ENCODE measurements at regions of chr19 and their contacts with region 1.

Region 1: DNA sequence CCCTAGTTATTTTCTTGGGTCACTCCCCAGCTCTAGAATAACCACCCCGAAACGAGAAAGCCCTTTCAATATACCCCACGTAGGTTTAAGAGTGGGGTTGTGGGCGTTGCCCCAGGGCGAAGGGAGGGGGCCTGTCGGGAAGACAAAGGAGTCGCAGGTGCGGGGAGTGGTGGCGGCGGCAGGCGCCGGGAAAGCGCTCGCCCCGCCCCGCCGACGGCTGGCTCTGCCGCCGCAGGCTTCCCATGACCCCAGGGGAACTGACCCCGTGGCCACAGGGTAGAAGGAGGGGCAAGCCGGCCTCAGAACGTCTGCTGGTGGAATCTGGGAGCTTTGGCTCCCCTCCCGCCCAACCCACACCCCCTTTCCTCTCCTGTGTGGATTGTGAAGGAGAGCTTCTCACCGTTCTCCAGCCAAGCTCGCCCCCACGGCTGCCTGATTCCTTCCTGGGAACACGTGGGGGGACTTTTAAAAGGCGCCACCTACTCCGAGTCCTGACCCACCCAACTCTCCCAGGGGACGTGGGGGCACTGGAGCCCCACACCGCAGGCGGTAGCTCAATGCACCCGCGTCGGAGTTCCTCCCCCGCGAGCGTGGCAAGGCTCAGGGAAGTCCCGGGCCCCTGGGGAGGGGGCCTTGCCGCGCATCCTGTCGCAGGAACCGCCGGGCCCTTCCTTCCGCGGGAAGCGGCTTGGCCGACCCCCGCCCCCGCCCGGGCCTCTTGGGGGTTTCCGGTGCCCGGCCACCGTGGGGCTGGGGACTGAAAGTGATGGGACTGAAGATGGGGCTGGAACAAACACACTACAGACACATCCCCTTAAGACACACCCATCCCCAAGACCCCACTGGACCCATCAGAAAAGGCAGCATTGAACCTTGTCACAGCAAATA is 5.5 kb downstream of the IER2 start:
- DNase-seq: peak; percentile 81
- ATAC-seq: peak; percentile 14
- H3K4me3 ChIP-seq: peak overlapping the region; percentile 93
- H3K27ac ChIP-seq: peak overlapping the region; percentile 91
- H3K4me1 ChIP-seq: peaks cover 22% of the 10 kb centered on the region
- H3K27me3 ChIP-seq: no peaks in the 10 kb centered on the region
- CTCF ChIP-seq: no peak

Region 2: DNA sequence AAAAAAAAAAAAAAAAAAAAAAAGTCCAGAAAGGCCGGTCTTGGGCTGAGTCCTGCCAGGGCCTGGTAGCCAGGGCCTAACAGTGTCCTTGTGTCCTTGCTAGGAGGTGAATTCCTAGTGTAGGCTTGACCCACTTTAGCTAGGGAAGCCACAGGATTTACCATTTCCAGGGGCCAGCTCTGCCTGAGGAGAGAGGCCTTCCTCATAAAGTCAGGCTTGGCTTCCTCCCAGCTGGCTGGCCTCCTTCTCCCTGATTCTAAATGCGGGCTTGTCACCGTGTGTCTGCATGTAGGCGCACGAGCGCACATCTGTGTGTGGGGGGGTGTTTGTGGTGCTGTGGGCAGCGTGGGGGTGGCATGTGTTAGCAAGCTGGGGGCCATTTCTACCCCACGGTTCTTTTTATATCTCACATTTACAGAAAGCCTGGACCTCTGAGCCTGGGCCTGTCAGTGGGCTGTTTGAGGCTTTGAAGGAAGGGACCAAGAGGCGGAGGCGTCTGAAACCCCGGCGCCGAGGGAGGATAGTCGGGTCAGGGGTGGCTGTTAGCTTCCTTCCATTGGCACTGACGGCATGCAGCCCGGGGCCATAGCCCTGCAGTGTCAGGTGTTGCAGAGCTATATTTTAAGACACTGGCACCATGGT is 26.2 kb after region 1 on chr19:
- CTCF ChIA-PET with region 1: no interaction called
- POLR2A ChIA-PET with region 1: interaction called, 16 read pairs
- intact Hi-C with region 1: no loop called
- DNase-seq: peak; percentile 66
- ATAC-seq: peak; percentile 85
- H3K4me3 ChIP-seq: no peak overlapping the region
- H3K27ac ChIP-seq: peak overlapping the region; percentile 16; the same call in 1 of the 2 replicates
- H3K4me1 ChIP-seq: peaks cover 8% of the 10 kb centered on the region
- H3K27me3 ChIP-seq: no peaks in the 10 kb centered on the region
- CTCF ChIP-seq: no peak

Region 3: GRCh38 chr19:13195678-13196077 is 40.0 kb after region 1 on chr19:
- CTCF ChIA-PET with region 1: interaction called, 10 read pairs
- POLR2A ChIA-PET with region 1: interaction called, 3 read pairs
- intact Hi-C with region 1: no loop called
- DNase-seq: no peak
- ATAC-seq: no peak
- H3K4me3 ChIP-seq: no peak overlapping the region
- H3K27ac ChIP-seq: no peak overlapping the region
- H3K4me1 ChIP-seq: no peaks in the 10 kb centered on the region
- H3K27me3 ChIP-seq: no peaks in the 10 kb centered on the region
- CTCF ChIP-seq: no peak; the same call in 1 of the 2 replicates

Measured in PC-3 (cell line).